CD4-positive, alpha-beta T cell (primary cell): ENCODE measurements at regions of chr3 and their contacts with region 1.

Region 1: GRCh38 chr3:46078712-46079400 is 51.6 kb upstream of the XCR1 start:
- DNase-seq: peak; percentile 73 to 96 (median 88)
- ATAC-seq: peak; percentile 100
- H3K4me3 ChIP-seq: no peak overlapping the region
- H3K4me3 Mint-ChIP-seq: no peak overlapping the region
- H3K27ac ChIP-seq: no peak overlapping the region
- H3K27ac Mint-ChIP-seq: no peak overlapping the region
- H3K4me1 ChIP-seq: peaks cover 5% of the 10 kb centered on the region
- H3K4me1 Mint-ChIP-seq: peaks cover 5% of the 10 kb centered on the region
- H3K27me3 ChIP-seq: no peaks in the 10 kb centered on the region
- H3K27me3 Mint-ChIP-seq: no peaks in the 10 kb centered on the region
- CTCF ChIP-seq: peak; percentile 100

Region 2: DNA sequence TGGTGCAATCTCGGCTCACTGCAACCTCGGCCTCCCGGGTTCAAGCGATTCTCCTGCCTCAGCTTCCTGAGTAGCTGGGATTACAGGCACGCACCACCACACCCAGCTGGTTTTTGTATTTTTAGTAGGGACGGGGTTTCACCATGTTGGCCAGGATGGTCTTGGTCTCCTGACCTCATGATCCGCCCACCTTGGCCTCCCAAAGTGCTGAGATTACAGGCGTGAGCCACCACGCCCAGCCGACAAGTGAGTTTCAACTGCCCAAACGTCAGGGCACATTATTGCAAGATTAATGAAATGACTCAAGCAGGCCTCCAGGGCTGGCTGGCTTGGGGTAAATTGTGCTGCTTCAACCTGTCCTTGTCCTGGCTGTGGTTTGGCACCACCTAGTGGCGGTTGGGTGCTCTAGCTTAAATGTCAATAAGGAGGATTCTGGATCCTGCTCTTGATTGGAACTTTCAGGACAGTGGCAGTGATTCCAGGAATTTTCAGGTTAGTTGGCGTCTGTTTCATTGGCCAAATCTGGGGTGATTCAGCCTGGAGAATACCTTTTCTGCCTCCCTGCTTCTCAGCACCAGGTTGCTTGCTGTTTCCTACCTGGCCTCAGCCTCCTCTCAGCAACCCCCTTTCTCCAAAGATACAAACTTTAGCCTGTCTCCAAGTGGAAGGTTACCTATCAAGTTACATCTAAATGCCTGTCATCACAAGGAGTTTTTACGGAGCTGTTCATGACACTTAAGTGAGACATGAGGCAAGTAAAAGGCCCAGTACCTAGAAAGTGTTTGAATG is 422.1 kb before region 1 on chr3:
- CTCF ChIA-PET with region 1: interaction called, 4 read pairs
- POLR2A ChIA-PET with region 1: no interaction called
- intact Hi-C with region 1: loop called in 1 of 2 experiments (anchors 5 kb)
- DNase-seq: peak; percentile 75 to 92 (median 83)
- ATAC-seq: peak; percentile 93
- H3K4me3 ChIP-seq: no peak overlapping the region
- H3K4me3 Mint-ChIP-seq: no peak overlapping the region
- H3K27ac ChIP-seq: no peak overlapping the region
- H3K27ac Mint-ChIP-seq: peak overlapping the region; percentile 47
- H3K4me1 ChIP-seq: peaks cover 9% of the 10 kb centered on the region
- H3K4me1 Mint-ChIP-seq: peaks cover 17% of the 10 kb centered on the region
- H3K27me3 ChIP-seq: no peaks in the 10 kb centered on the region
- H3K27me3 Mint-ChIP-seq: no peaks in the 10 kb centered on the region
- CTCF ChIP-seq: peak; percentile 90

Region 3: DNA sequence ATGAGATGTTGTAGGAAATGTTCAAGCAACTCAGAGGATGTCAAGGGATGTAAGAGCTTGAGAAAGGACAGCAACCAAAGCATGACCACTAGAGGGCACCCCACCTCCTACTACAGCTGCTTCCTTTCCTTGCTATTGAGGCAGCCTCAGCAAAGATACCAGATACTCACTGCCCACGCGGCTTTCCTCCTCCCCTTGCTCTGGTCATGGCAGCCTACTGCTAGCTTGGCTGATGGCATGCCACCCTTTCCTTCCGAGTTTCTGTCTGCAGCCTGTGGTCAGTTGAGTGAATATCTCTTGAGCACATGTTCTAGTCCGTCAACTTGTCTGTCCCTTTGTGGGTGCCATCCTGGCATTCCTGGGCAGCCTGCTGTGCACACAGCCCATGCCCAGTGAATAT is 140.0 kb before region 1 on chr3:
- CTCF ChIA-PET with region 1: interaction called, 96 read pairs
- POLR2A ChIA-PET with region 1: interaction called, 9 read pairs
- intact Hi-C with region 1: loop called (anchors 1 kb)
- DNase-seq: peak; percentile 72 to 93 (median 82)
- ATAC-seq: peak; percentile 65
- H3K4me3 ChIP-seq: no peak overlapping the region
- H3K4me3 Mint-ChIP-seq: no peak overlapping the region
- H3K27ac ChIP-seq: no peak overlapping the region
- H3K27ac Mint-ChIP-seq: no peak overlapping the region
- H3K4me1 ChIP-seq: peaks cover 30% of the 10 kb centered on the region
- H3K4me1 Mint-ChIP-seq: peaks cover 37% of the 10 kb centered on the region
- H3K27me3 ChIP-seq: no peaks in the 10 kb centered on the region
- H3K27me3 Mint-ChIP-seq: no peaks in the 10 kb centered on the region
- CTCF ChIP-seq: peak; percentile 83

Region 4: GRCh38 chr3:45978006-45978761 is 100.7 kb before region 1 on chr3:
- CTCF ChIA-PET with region 1: interaction called, 11 read pairs
- POLR2A ChIA-PET with region 1: no interaction called
- intact Hi-C with region 1: no loop called
- DNase-seq: peak in 13 of 14 experiments; percentile 35 to 74 (median 46)
- ATAC-seq: peak; percentile 17
- H3K4me3 ChIP-seq: no peak overlapping the region
- H3K4me3 Mint-ChIP-seq: peak overlapping the region; percentile 81
- H3K27ac ChIP-seq: peak overlapping the region in 1 of 2 donors; percentile 8
- H3K27ac Mint-ChIP-seq: peak overlapping the region; percentile 96
- H3K4me1 ChIP-seq: peaks cover 77% of the 10 kb centered on the region
- H3K4me1 Mint-ChIP-seq: peaks cover 68% of the 10 kb centered on the region
- H3K27me3 ChIP-seq: no peaks in the 10 kb centered on the region
- H3K27me3 Mint-ChIP-seq: no peaks in the 10 kb centered on the region
- CTCF ChIP-seq: no peak

Region 5: GRCh38 chr3:46059432-46059831 is 19.4 kb before region 1 on chr3:
- CTCF ChIA-PET with region 1: interaction called, 17 read pairs
- POLR2A ChIA-PET with region 1: interaction called, 24 read pairs
- intact Hi-C with region 1: loop called in 1 of 2 experiments (anchors 2 kb)
- DNase-seq: peak in 3 of 14 experiments; percentile 15 to 36 (median 19)
- ATAC-seq: no peak
- H3K4me3 ChIP-seq: no peak overlapping the region
- H3K4me3 Mint-ChIP-seq: no peak overlapping the region
- H3K27ac ChIP-seq: no peak overlapping the region
- H3K27ac Mint-ChIP-seq: no peak overlapping the region
- H3K4me1 ChIP-seq: peaks cover 30% of the 10 kb centered on the region
- H3K4me1 Mint-ChIP-seq: peaks cover 13% of the 10 kb centered on the region
- H3K27me3 ChIP-seq: no peaks in the 10 kb centered on the region
- H3K27me3 Mint-ChIP-seq: peaks cover 19% of the 10 kb centered on the region
- CTCF ChIP-seq: no peak

Region 6: DNA sequence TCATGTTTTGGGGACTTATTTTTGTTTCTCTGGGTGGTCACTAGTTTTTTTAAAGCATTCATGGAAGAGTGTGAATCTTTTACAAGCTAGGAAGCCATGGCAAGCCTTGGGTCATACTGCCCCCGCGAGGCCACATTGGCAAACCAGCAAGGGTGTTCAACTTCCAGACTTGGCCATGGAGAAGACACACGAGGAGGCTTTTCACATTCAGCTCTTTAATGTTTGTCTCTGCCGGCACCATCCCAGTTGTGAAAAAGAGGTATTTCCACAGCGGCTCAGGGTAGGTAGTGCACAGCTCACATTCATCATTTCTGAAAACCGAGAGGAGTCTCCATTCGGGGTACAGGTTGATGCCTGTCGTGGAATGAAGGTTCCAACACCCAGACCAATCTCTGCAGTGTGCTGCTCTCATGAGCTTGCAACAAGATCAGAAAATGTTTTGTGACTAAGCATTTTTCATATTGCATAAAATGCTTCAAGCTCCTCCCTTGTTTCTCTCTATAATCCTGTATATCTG is 299.6 kb after region 1 on chr3:
- CTCF ChIA-PET with region 1: interaction called, 7 read pairs
- POLR2A ChIA-PET with region 1: no interaction called
- intact Hi-C with region 1: loop called (anchors 2 to 5 kb)
- DNase-seq: peak; percentile 37 to 77 (median 54)
- ATAC-seq: peak; percentile 54
- H3K4me3 ChIP-seq: no peak overlapping the region
- H3K4me3 Mint-ChIP-seq: no peak overlapping the region
- H3K27ac ChIP-seq: no peak overlapping the region
- H3K27ac Mint-ChIP-seq: no peak overlapping the region
- H3K4me1 ChIP-seq: peaks cover 43% of the 10 kb centered on the region
- H3K4me1 Mint-ChIP-seq: peaks cover 36% of the 10 kb centered on the region
- H3K27me3 ChIP-seq: no peaks in the 10 kb centered on the region
- H3K27me3 Mint-ChIP-seq: no peaks in the 10 kb centered on the region
- CTCF ChIP-seq: peak; percentile 65